ENCODE measurements at regions of chr20 and their contacts with region 1.

Region 1: GRCh38 chr20:32902456-32903420 is 44.0 kb downstream of the EFCAB8 start:
- DNase-seq: peak; percentile 66
- ATAC-seq: peak; percentile 73
- H3K4me3 ChIP-seq: no peak overlapping the region
- H3K27ac ChIP-seq: no peak overlapping the region
- H3K4me1 ChIP-seq: peaks cover 21% of the 10 kb centered on the region
- H3K27me3 ChIP-seq: peaks cover 4 to 38% of the 10 kb centered on the region in 2 experiments; a peak in 4 of 5 replicates
- CTCF ChIP-seq: peak; percentile 99
- EP300 ChIP-seq: no peak
- POLR2A ChIP-seq: no peak
- RAD21 ChIP-seq: peak; percentile 98

Region 2: DNA sequence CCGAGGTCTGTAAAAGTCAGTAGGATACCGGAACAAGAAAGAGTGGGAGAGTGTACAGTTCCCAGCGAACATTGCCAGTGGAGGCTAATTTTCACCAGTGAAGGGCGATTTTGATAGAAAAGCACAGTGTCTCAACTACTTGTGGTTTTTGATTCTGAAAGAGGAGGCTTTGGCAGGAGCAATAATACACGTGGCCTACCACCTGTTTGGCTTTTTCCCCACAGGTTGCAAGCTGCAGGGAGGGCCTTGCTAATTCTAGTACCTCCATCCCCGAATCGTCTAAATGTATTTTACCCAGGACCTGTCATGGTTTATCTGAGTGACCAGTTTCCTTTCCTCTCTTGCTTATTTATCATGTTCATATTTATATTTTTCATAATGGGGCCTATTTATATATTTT is 47.4 kb before region 1 on chr20:
- CTCF ChIA-PET with region 1: no interaction called
- POLR2A ChIA-PET with region 1: no interaction called
- in situ Hi-C with region 1: no loop called
- intact Hi-C with region 1: no loop called
- DNase-seq: no peak
- ATAC-seq: no peak
- H3K4me3 ChIP-seq: no peak overlapping the region
- H3K27ac ChIP-seq: no peak overlapping the region
- H3K4me1 ChIP-seq: no peaks in the 10 kb centered on the region
- H3K27me3 ChIP-seq: no peaks in the 10 kb centered on the region
- CTCF ChIP-seq: no peak
- EP300 ChIP-seq: no peak
- POLR2A ChIP-seq: no peak
- RAD21 ChIP-seq: no peak

Region 3: DNA sequence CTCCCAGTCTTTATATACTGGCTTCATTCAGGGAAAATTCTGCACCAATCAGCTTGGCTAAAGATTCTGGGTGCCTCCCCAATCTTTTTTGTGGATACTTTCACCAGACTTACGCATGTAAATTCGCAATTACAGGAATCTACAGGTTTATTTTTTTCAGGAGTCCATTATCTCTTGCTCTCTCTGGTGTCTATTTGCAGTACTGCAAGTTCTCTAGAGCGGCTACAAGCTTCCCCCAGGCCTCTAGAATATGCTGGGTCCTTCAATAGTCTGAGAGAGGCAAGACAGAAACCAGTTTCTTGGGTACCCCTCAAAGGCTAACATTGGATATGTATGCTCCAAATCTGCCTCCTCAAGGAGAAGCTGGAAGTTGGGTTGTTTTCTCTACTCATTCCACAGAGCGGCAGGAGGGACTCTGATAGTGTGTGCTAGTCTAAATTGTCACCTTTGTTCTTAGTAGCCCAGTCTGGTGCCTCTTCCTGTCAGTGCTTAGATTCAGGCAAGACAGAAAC is 43.0 kb after region 1 on chr20:
- CTCF ChIA-PET with region 1: interaction called, 21 read pairs
- POLR2A ChIA-PET with region 1: no interaction called
- in situ Hi-C with region 1: no loop called
- intact Hi-C with region 1: loop called (anchors 1 kb)
- DNase-seq: peak; percentile 55
- ATAC-seq: peak; percentile 96
- H3K4me3 ChIP-seq: no peak overlapping the region
- H3K27ac ChIP-seq: no peak overlapping the region
- H3K4me1 ChIP-seq: peaks cover 9% of the 10 kb centered on the region
- H3K27me3 ChIP-seq: peaks cover 0 to 4% of the 10 kb centered on the region in 2 experiments; a peak in 1 of 5 replicates
- CTCF ChIP-seq: peak; percentile 63
- EP300 ChIP-seq: no peak
- POLR2A ChIP-seq: no peak
- RAD21 ChIP-seq: peak; percentile 64

Region 4: DNA sequence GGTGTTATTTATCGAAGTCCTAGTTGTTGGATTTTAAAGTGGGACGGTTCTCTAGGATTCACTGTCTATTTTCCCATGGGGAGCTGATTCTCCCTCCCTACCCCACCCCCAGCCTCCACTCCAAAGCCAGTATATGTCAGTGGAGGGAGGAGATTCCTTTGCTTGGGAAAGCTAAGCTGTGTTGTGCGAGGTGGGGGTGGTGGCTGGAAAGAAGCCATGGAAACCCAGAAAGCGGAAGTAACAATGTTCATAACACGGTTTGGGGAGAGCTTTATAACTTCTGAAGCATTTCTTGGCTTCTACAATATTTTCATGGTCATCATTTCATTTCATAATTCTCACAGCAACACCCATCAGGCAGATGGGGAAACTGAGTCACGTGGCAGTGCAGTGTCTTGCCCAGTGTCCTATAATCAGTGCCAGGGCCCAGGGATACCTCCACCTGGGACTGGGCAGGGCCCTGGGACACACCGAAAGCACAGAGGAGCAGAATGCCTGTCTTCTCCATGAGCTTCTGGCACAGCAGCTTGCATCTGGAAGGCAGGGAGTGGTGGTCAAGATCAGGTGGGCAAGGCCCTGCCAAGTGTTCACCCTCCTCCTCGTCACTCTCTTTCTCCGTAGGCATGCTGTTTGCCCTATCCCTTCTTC is 97.0 kb after region 1 on chr20:
- CTCF ChIA-PET with region 1: interaction called, 11 read pairs
- POLR2A ChIA-PET with region 1: no interaction called
- in situ Hi-C with region 1: loop called (anchors 5 kb)
- intact Hi-C with region 1: no loop called
- DNase-seq: peak; percentile 58
- ATAC-seq: peak; percentile 16; the same call in 2 of the 3 replicates
- H3K4me3 ChIP-seq: peak overlapping the region in 1 of 3 experiments; percentile 41; a peak in 1 of 6 replicates
- H3K27ac ChIP-seq: no peak overlapping the region
- H3K4me1 ChIP-seq: peaks cover 46% of the 10 kb centered on the region
- H3K27me3 ChIP-seq: peaks cover 0 to 18% of the 10 kb centered on the region in 2 experiments; a peak in 1 of 5 replicates
- CTCF ChIP-seq: no peak
- EP300 ChIP-seq: peak in 1 of 2 experiments; percentile 30; a peak in 1 of 4 replicates
- POLR2A ChIP-seq: no peak
- RAD21 ChIP-seq: no peak

Region 5: DNA sequence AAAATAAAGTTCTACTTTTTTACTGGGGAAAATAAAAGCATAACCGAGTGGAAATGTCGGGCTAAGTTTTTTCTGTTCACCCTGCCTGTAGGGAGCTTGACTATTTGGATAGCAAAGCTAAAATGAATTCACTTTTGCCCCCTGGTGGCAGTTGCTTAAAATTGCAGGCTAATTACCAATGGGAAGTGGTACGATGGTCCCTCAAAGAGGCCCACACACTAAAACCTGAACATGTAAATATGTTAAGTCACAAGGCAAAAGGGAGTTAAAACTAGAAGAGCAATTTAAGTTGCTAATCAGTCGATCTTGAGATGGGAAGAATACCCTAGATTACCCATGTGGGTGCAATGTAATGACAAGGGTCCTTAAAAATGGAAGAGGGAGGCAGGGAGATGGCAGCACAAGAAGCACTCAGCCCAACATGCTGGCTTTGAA is 102.4 kb after region 1 on chr20:
- CTCF ChIA-PET with region 1: interaction called, 11 read pairs
- POLR2A ChIA-PET with region 1: no interaction called
- in situ Hi-C with region 1: loop called (anchors 5 kb)
- intact Hi-C with region 1: loop called (anchors 1 kb)
- DNase-seq: peak; percentile 72
- ATAC-seq: no peak
- H3K4me3 ChIP-seq: peak overlapping the region in 1 of 3 experiments; percentile 79; a peak in 1 of 6 replicates
- H3K27ac ChIP-seq: no peak overlapping the region
- H3K4me1 ChIP-seq: peaks cover 86% of the 10 kb centered on the region
- H3K27me3 ChIP-seq: peaks cover 0 to 6% of the 10 kb centered on the region in 2 experiments; a peak in 1 of 5 replicates
- CTCF ChIP-seq: peak; percentile 82
- EP300 ChIP-seq: no peak
- POLR2A ChIP-seq: no peak
- RAD21 ChIP-seq: peak; percentile 63

Region 6: DNA sequence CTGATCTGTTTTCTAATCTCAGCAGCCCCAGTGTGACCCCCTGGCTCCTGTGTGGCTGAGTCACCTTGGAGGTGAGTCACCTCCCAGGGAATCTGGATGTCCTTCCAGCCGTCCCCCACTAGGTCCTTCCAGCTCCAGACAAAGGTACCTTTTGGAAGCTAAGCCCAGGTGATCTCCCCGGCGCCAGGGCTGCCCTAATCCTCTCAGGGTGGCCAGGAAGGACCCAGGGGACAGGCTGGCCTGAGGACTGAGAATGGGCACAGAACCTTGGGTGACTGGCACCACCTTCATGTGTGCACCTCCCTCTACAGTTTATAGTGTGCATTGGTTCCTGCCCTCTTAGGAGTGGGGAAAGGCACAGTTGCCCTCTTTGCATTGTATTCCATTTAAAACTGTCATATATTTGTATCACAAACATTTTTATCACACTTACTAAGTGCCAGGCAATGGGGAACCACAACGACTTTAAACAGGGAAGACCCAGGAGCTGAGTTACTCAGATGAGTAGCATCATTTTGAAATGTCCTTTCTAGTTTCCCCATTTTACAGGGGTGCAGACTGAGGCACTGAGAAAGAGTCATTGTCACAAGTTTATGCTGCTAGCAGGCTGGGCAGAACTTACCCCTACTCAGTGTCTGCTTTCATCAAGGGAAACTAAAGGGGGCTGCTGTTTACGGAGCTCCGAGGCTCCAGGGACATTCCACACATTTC is 174.1 kb after region 1 on chr20:
- CTCF ChIA-PET with region 1: no interaction called
- POLR2A ChIA-PET with region 1: no interaction called
- in situ Hi-C with region 1: no loop called
- intact Hi-C with region 1: loop called (anchors 5 kb)
- DNase-seq: peak; percentile 28
- ATAC-seq: peak; percentile 74
- H3K4me3 ChIP-seq: no peak overlapping the region
- H3K27ac ChIP-seq: no peak overlapping the region
- H3K4me1 ChIP-seq: no peaks in the 10 kb centered on the region
- H3K27me3 ChIP-seq: peaks cover 0 to 16% of the 10 kb centered on the region in 2 experiments; a peak in 3 of 5 replicates
- CTCF ChIP-seq: peak; percentile 80
- EP300 ChIP-seq: no peak
- POLR2A ChIP-seq: no peak
- RAD21 ChIP-seq: peak; percentile 42

Region 7: DNA sequence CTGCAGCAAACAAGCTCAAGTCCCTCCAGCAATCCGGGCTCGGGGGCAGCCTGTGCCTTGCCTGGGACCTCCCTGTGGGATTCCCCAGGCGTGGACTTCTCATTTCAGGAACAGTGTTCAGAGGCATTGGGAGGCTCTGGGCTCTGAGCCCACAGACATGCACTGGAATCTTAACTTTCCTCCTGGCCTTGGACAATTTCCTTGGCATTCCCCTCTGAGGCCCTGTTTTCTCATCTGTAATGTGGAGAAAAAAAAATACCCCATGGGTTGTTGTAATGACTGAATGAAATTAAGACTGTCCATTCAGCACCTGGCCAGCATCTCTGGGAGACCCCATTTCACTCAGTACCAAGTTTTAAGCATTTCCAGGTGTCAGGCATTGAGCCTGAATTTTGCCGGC is 194.3 kb after region 1 on chr20:
- CTCF ChIA-PET with region 1: interaction called, 97 read pairs
- POLR2A ChIA-PET with region 1: no interaction called
- in situ Hi-C with region 1: loop called (anchors 5 kb)
- intact Hi-C with region 1: loop called (anchors 1 kb)
- DNase-seq: no peak
- ATAC-seq: no peak
- H3K4me3 ChIP-seq: no peak overlapping the region
- H3K27ac ChIP-seq: no peak overlapping the region
- H3K4me1 ChIP-seq: no peaks in the 10 kb centered on the region
- H3K27me3 ChIP-seq: no peaks in the 10 kb centered on the region; a peak in 1 of 5 replicates
- CTCF ChIP-seq: no peak
- EP300 ChIP-seq: no peak
- POLR2A ChIP-seq: no peak
- RAD21 ChIP-seq: no peak

Region 8: DNA sequence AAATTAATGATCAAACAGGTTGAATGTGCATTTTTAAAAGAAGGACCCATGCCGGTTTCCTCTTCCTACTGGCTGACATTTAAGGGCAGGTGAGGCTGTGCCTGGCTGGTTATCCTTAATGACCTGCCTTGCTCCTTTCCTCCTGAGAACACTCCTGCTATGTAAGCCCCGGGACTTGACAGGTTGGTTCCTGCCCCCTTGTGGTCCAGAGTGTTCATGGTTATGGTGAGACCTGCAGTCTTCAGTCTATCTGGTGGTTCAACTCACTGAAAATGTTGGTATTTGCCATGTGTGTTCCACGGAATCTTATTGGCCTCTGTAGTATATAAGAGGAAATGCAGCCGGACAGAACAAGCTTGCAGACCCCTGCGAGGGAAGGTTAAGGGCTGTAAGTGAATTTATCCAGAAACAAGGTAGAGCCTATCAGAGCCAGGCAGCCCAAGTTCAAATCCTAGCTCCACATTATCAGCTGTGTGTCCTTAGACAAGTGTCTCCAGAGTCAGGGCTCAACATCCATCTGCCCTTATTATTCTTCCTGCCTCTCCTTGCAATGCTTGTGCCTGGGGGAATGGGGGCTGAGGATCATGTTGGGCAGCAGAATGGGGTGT is 309.2 kb after region 1 on chr20:
- CTCF ChIA-PET with region 1: interaction called, 7 read pairs
- POLR2A ChIA-PET with region 1: no interaction called
- in situ Hi-C with region 1: loop called (anchors 10 kb)
- intact Hi-C with region 1: loop called (anchors 5 kb)
- DNase-seq: peak; percentile 78
- ATAC-seq: peak; percentile 94
- H3K4me3 ChIP-seq: no peak overlapping the region
- H3K27ac ChIP-seq: no peak overlapping the region
- H3K4me1 ChIP-seq: no peaks in the 10 kb centered on the region
- H3K27me3 ChIP-seq: peaks cover 2 to 4% of the 10 kb centered on the region in 2 experiments; a peak in 1 of 5 replicates
- CTCF ChIP-seq: peak; percentile 83
- EP300 ChIP-seq: no peak
- POLR2A ChIP-seq: no peak
- RAD21 ChIP-seq: peak; percentile 52

Measured in HepG2 (cell line).